Heart right ventricle (tissue), 16 donors: ENCODE measurements at regions of chr13 and their contacts with region 1.

Region 1: GRCh38 chr13:44435142-44435982 is 61.7 kb downstream of the SERP2 start:
- DNase-seq: peak; percentile 91 to 98
- ATAC-seq: peak; percentile 79 to 87 (median 82)
- H3K4me3 ChIP-seq: peak overlapping the region; percentile 59 to 93 (median 70)
- H3K27ac ChIP-seq: peak overlapping the region; percentile 79 to 99 (median 94)
- H3K4me1 ChIP-seq: peaks cover 0 to 42% (median 41%) of the 10 kb centered on the region in 9 donors
- H3K27me3 ChIP-seq: no peaks in the 10 kb centered on the region
- CTCF ChIP-seq: no peak

Region 2: GRCh38 chr13:43240278-43240677 is 1195.1 kb before region 1 on chr13:
- intact Hi-C with region 1: no loop called
- DNase-seq: no peak
- ATAC-seq: no peak
- H3K4me3 ChIP-seq: no peak overlapping the region
- H3K27ac ChIP-seq: no peak overlapping the region
- H3K4me1 ChIP-seq: peaks cover 0 to 5% (median 0%) of the 10 kb centered on the region in 9 donors
- H3K27me3 ChIP-seq: no peaks in the 10 kb centered on the region
- CTCF ChIP-seq: no peak

Region 3: DNA sequence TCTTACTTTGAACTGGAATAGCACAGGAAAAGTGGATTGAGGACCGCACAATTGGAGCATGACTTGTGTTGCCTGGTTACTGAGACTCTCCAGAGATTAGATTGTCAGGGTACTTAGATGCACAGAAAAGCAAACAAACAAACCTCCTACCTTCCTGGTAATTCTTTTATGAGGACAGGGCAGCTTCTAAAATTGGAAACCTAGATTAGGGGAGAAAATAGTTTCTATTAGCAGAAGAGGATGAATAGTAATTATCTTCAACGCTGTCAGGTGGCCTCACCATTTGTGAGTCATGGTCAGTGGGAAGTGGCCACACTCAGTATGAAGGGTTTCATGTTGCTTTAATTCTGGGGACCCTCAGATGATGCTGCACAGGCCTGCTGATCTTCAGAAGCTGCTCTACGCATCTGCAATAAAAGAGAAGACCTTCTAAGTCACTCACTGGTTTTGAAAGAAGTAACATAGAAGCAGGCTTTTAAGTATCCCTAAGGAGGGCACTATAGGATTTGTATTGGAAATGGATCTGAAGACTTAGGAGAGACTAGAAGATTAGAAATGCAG is 448.9 kb before region 1 on chr13:
- intact Hi-C with region 1: loop called in 1 of 10 experiments (anchors 2 kb)
- DNase-seq: peak in 1 of 2 donors; percentile 16
- ATAC-seq: peak; percentile 71 to 96 (median 90)
- H3K4me3 ChIP-seq: no peak overlapping the region
- H3K27ac ChIP-seq: peak overlapping the region; percentile 24 to 82 (median 73)
- H3K4me1 ChIP-seq: peaks cover 0 to 41% (median 18%) of the 10 kb centered on the region in 9 donors
- H3K27me3 ChIP-seq: no peaks in the 10 kb centered on the region
- CTCF ChIP-seq: peak in 4 of 9 donors; percentile 8 to 44 (median 26)

Region 4: GRCh38 chr13:44191504-44192171 is 243.7 kb before region 1 on chr13:
- intact Hi-C with region 1: loop called in 8 of 10 experiments (anchors 1 to 10 kb)
- DNase-seq: peak in 1 of 2 donors; percentile 71
- ATAC-seq: peak; percentile 76 to 97 (median 95)
- H3K4me3 ChIP-seq: peak overlapping the region in 3 of 10 donors; percentile 21
- H3K27ac ChIP-seq: peak overlapping the region in 6 of 10 donors; percentile 10 to 62 (median 51)
- H3K4me1 ChIP-seq: peaks cover 0 to 11% (median 0%) of the 10 kb centered on the region in 9 donors
- H3K27me3 ChIP-seq: no peaks in the 10 kb centered on the region
- CTCF ChIP-seq: peak; percentile 51 to 80 (median 70)

Region 5: DNA sequence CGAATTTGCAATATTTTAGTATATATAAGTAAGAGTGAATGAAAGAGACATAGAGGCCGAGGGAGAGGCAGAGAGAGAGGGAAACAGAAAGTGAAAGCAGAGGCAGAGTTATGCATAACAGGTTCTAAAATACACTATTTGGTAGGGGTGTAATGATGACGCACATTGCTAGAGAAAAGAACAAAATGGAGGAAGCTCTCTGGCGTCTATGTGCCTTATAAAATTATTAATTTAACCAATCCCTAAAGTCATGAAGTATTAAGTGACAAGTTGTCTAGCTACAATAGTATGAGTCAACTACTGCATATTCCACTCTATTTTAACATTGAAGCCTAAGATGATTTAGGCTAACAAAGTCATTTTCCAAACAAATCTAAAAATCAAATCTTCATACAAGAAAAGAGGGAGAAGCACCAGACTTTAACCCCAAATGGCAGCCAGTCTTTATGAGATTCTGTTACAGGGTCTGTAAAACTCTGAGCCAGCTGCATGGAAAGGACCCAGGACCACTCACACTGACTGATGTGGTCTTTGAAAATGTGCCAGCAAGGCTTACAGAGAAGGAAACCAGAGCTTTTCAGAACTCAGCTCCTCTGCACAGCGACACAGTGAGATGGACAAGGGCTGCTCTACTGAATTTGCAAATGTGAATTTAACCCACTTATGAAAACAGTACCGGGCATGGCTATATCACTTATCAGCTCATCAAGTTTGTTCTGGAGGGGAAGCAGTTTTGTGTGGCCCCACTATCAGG is 160.7 kb before region 1 on chr13:
- intact Hi-C with region 1: no loop called
- DNase-seq: no peak
- ATAC-seq: peak in 7 of 8 donors; percentile 62 to 87 (median 79)
- H3K4me3 ChIP-seq: peak overlapping the region in 5 of 10 donors; percentile 0 to 21 (median 9)
- H3K27ac ChIP-seq: peak overlapping the region; percentile 36 to 86 (median 77)
- H3K4me1 ChIP-seq: peaks cover 8 to 67% (median 56%) of the 10 kb centered on the region in 9 donors
- H3K27me3 ChIP-seq: no peaks in the 10 kb centered on the region
- CTCF ChIP-seq: no peak

Region 6: GRCh38 chr13:44300895-44301638 is 134.3 kb before region 1 on chr13:
- intact Hi-C with region 1: loop called in 7 of 10 experiments (anchors 2 to 10 kb)
- DNase-seq: peak in 1 of 2 donors; percentile 74
- ATAC-seq: peak; percentile 54 to 92 (median 84)
- H3K4me3 ChIP-seq: no peak overlapping the region
- H3K27ac ChIP-seq: peak overlapping the region; percentile 12 to 82 (median 70)
- H3K4me1 ChIP-seq: peaks cover 9 to 78% (median 55%) of the 10 kb centered on the region in 9 donors
- H3K27me3 ChIP-seq: no peaks in the 10 kb centered on the region
- CTCF ChIP-seq: no peak

Region 7: GRCh38 chr13:44388427-44389059 is 46.8 kb before region 1 on chr13:
- intact Hi-C with region 1: loop called in 3 of 10 experiments (anchors 5 kb)
- DNase-seq: no peak
- ATAC-seq: peak; percentile 36 to 86 (median 70)
- H3K4me3 ChIP-seq: no peak overlapping the region
- H3K27ac ChIP-seq: peak overlapping the region in 4 of 10 donors; percentile 10 to 52 (median 28)
- H3K4me1 ChIP-seq: peaks cover 0 to 32% (median 8%) of the 10 kb centered on the region in 9 donors
- H3K27me3 ChIP-seq: no peaks in the 10 kb centered on the region
- CTCF ChIP-seq: peak in 1 of 9 donors; percentile 20

Region 8: DNA sequence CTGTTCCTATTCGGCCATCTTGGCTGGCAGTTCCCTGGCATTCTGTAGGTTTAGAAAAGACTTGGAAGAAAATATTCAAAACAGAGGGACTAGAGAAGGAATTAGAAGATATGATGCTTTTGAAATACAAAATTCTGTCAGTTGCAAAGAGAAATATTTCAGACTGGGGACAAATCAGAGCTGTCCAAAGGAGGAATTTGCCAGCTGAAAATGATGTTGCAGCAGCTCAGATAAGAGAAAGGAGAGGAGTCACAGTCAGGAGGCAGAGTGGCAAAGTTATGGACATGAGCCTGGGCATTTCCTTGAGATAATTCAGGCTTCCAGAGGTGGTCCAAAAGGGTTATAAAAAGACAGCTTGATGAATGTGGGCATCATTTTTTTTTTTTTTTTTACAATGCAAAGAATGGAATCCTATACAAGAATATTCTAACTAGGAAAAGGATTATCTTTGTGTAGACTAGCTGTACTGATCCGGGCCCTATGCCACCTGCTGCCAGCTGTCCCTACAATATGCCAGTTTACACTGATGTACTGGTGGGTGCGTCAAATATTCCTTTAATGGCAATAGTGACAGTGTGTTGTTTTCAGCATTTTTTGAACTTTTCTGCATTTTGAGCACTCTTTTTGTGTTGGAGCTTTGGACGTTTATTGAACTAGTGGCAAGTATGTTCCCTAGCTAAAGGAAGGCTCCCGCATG is 1235.0 kb after region 1 on chr13:
- intact Hi-C with region 1: no loop called
- DNase-seq: no peak
- ATAC-seq: no peak
- H3K4me3 ChIP-seq: no peak overlapping the region
- H3K27ac ChIP-seq: no peak overlapping the region
- H3K4me1 ChIP-seq: no peaks in the 10 kb centered on the region
- H3K27me3 ChIP-seq: peaks cover 0 to 17% (median 0%) of the 10 kb centered on the region in 7 donors
- CTCF ChIP-seq: no peak